Spleen (tissue), 13 donors: ENCODE measurements at regions of chr3 and their contacts with region 1.

Region 1: DNA sequence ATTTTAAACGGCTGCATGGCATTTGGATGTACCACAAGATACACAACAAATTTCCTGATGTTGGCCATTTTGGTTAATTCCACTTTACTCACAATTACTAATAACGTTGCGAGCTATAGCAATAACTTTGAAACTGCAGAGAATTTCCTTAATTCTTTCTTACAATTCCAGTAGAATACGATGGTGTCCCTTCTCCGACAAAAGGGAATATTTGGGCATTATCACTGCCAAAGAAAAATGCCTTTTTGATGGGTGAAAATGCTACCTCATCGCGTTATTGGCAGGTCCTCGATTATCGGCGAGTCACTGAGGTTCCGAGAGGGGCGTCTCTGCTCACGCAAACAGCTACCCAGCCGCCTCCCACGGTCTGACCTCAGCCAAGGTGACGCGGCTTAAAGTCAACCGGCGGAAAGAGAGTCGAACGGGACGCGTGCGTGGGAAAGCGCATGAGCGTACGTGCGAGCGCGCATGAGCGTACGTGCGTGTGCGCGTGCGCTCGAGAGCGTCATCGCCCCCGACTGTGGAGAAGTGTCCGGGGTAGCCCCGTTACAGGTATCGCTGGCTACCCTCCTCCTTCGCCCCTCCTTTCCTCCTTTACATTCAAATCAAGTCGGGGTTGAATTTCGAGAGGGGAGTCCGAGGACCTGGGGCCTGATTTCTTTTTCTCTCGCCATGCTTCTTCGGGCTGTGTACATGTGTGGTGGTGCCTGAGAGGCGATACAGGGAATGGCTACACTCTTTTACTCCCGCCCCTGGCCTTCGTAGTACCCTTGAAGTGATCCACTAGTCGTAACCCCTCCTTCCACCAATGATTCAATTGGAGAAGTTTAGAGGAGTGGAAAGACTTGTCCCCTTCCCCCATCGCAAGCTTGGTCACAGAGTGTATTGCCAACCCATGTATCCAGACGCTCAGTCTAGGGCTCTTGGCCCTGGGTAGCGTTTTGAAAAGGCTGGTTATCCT is at the start of gene OXSM:
- DNase-seq: peak; percentile 97
- H3K4me3 ChIP-seq: peak within 1 kb of the TSS; percentile 39 to 73 (median 51)
- H3K27ac ChIP-seq: peak within 1 kb of the TSS; percentile 79 to 91 (median 88)
- H3K4me1 ChIP-seq: peaks cover 8 to 50% (median 30%) of the 10 kb centered on the region in 6 donors
- H3K27me3 ChIP-seq: no peaks in the 10 kb centered on the region
- CTCF ChIP-seq: peak in 3 of 11 experiments; percentile 10 to 20 (median 13)
- POLR2A ChIP-seq: peak; percentile 21 to 80 (median 68)
- total RNA-seq, gene OXSM: 6.9 to 13.2 (median 9.4) TPM

Region 2: GRCh38 chr3:25664810-25665314 is 125.0 kb before region 1 on chr3 and contains the start of gene TOP2B:
- intact Hi-C with region 1: loop called (anchors 5 kb)
- DNase-seq: peak; percentile 98
- H3K4me3 ChIP-seq: peak within 1 kb of the TSS; percentile 65 to 86 (median 80)
- H3K27ac ChIP-seq: peak within 1 kb of the TSS; percentile 93 to 99 (median 98)
- H3K4me1 ChIP-seq: peaks cover 34 to 54% (median 49%) of the 10 kb centered on the region in 6 donors
- H3K27me3 ChIP-seq: no peaks in the 10 kb centered on the region
- CTCF ChIP-seq: peak in 3 of 11 experiments; percentile 10 to 33 (median 16)
- POLR2A ChIP-seq: peak in 2 of 3 donors; percentile 56 to 89
- total RNA-seq, gene TOP2B: 113 to 135 (median 120) TPM

Region 3: GRCh38 chr3:25843332-25843731 is 53.5 kb after region 1 on chr3:
- intact Hi-C with region 1: no loop called
- DNase-seq: no peak
- H3K4me3 ChIP-seq: no peak overlapping the region
- H3K27ac ChIP-seq: no peak overlapping the region
- H3K4me1 ChIP-seq: no peaks in the 10 kb centered on the region
- H3K27me3 ChIP-seq: no peaks in the 10 kb centered on the region
- CTCF ChIP-seq: peak in 1 of 11 experiments; percentile 5
- POLR2A ChIP-seq: no peak